PC-3 (cell line): ENCODE measurements at regions of chr2 and their contacts with region 1.

Region 1: GRCh38 chr2:157194097-157194688 is 63.3 kb upstream of the GALNT5 start:
- DNase-seq: peak; percentile 79
- ATAC-seq: peak; percentile 45
- H3K4me3 ChIP-seq: no peak overlapping the region
- H3K27ac ChIP-seq: no peak overlapping the region
- H3K4me1 ChIP-seq: no peaks in the 10 kb centered on the region
- H3K27me3 ChIP-seq: no peaks in the 10 kb centered on the region
- CTCF ChIP-seq: peak; percentile 89

Region 2: DNA sequence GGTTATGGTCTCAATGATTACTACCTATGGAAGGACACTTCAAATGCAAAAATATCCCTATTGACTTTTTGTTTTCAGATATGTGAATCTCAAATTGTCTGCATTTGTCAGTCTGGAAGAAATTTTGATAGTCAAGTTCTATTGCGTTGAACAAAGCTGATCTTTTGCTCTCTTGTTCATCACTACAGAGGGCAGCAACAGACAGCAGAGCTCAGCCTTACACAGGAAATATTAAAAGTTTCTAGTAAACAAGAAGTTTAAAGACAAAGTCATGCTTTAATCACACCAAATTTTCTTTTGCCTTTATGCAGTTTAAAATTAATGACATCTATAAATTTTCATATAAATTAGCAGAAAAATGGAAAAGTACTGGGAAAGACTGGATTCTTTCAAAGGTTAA is 1479.2 kb before region 1 on chr2:
- CTCF ChIA-PET with region 1: no interaction called
- POLR2A ChIA-PET with region 1: no interaction called
- intact Hi-C with region 1: loop called (anchors 10 kb)
- DNase-seq: no peak
- ATAC-seq: peak; percentile 88
- H3K4me3 ChIP-seq: no peak overlapping the region
- H3K27ac ChIP-seq: no peak overlapping the region
- H3K4me1 ChIP-seq: no peaks in the 10 kb centered on the region
- H3K27me3 ChIP-seq: no peaks in the 10 kb centered on the region
- CTCF ChIP-seq: no peak

Region 3: GRCh38 chr2:156400706-156401678 is 793.2 kb before region 1 on chr2:
- CTCF ChIA-PET with region 1: no interaction called
- POLR2A ChIA-PET with region 1: no interaction called
- intact Hi-C with region 1: loop called (anchors 5 kb)
- DNase-seq: peak; percentile 83
- ATAC-seq: peak; percentile 73
- H3K4me3 ChIP-seq: peak overlapping the region; percentile 74
- H3K27ac ChIP-seq: peak overlapping the region; percentile 91
- H3K4me1 ChIP-seq: peaks cover 21% of the 10 kb centered on the region
- H3K27me3 ChIP-seq: no peaks in the 10 kb centered on the region
- CTCF ChIP-seq: no peak

Region 4: DNA sequence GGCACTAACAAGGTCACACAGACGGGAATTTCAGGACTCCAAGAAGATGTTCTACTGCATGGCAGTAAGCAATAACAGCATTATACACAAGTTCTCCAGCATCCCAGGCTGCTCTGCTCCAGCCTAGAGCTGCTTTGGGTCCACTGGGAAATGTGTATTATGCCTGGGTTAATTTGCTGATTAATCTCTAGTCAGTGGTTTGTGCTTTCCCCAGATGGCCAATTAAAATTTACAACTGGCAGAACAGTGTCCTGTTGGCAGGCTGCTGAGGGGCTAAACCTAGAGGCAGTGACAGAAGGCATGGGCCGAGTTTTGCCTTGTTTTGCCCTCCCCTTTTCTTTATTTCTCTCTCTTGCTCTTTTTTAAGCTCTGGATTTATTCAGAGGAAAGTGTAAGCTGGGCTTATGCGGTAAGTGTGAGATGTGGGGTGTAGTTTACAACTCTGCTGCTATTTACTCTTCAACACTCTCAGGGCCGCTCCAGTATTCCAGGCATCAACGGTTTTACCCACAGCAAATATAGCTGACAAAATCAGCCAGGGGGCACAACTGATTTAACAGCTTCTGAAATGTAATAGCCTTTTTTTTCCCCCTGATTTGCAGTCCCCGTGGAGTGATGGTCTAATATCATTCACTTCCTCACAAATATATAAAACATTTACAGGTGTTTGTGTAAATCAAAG is 410.0 kb before region 1 on chr2:
- CTCF ChIA-PET with region 1: no interaction called
- POLR2A ChIA-PET with region 1: no interaction called
- intact Hi-C with region 1: loop called (anchors 10 kb)
- DNase-seq: no peak
- ATAC-seq: peak; percentile 49
- H3K4me3 ChIP-seq: no peak overlapping the region
- H3K27ac ChIP-seq: no peak overlapping the region
- H3K4me1 ChIP-seq: peaks cover 38% of the 10 kb centered on the region
- H3K27me3 ChIP-seq: no peaks in the 10 kb centered on the region
- CTCF ChIP-seq: no peak